Spleen (tissue), 13 donors: ENCODE measurements at regions of chr19 and their contacts with region 1.

Region 1: DNA sequence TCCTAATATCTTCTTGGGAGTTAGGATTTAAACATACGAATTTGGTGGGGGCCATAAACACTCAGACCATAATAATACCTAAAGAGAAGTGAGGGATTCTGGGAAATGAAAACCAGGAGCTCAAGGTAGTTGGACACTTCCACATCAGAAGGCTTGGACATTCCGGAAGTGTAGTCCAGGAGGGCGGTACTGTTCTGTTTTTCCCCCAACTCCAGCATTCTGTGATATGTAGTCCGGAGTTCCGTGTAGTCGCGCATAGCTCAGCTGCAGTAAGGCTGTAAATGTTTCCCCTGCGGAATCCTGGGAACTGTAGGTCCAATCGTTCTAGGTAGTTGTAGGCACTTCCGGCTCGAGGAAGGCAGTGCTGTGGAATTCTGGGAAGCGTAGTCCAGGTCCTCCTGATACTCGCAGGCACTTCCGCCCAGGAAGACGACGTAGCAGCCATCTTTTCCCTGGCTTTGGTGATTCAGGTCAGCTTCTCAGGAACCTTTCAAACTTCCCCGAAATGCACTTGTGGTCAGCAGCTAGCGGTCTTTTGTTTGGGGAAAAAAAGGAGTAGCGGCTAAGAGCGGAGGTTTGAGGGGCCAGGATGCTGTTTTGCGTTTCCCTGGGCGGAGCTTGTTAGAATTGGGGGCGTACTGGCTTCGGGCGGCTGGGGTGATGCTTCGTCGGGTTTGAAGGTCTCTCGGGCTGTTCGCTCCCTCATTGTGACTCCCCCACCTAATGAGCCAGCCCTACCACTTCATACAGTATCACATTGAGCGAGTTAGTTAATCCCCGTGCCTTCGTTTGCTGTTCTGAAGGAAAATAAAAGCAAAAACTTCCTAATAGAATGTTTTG is at the start of gene ZNF226:
- DNase-seq: peak; percentile 91
- H3K4me3 ChIP-seq: peak within 1 kb of the TSS; percentile 52 to 82 (median 66)
- H3K27ac ChIP-seq: peak within 1 kb of the TSS; percentile 81 to 95 (median 90)
- H3K4me1 ChIP-seq: peaks cover 9 to 25% (median 16%) of the 10 kb centered on the region in 6 donors
- H3K27me3 ChIP-seq: no peaks in the 10 kb centered on the region
- CTCF ChIP-seq: peak in 2 of 11 experiments; percentile 6 to 20
- POLR2A ChIP-seq: peak in 1 of 3 donors; percentile 58
- total RNA-seq, gene ZNF226: 21.5 to 40.0 (median 29.3) TPM

Region 2: GRCh38 chr19:44113138-44113783 is 51.6 kb before region 1 on chr19 and contains the start of gene ZNF225:
- intact Hi-C with region 1: loop called (anchors 10 kb)
- DNase-seq: peak; percentile 94
- H3K4me3 ChIP-seq: peak within 1 kb of the TSS; percentile 71 to 91 (median 78)
- H3K27ac ChIP-seq: peak within 1 kb of the TSS; percentile 32 to 85 (median 78)
- H3K4me1 ChIP-seq: peaks cover 10 to 34% (median 24%) of the 10 kb centered on the region in 6 donors
- H3K27me3 ChIP-seq: no peaks in the 10 kb centered on the region
- CTCF ChIP-seq: peak in 4 of 11 experiments; percentile 19 to 42 (median 32)
- POLR2A ChIP-seq: no peak
- total RNA-seq, gene ZNF225: 5.0 to 9.4 (median 6.6) TPM

Region 3: GRCh38 chr19:44207126-44207803 is 42.4 kb after region 1 on chr19:
- intact Hi-C with region 1: loop called (anchors 5 kb)
- DNase-seq: peak; percentile 93
- H3K4me3 ChIP-seq: peak overlapping the region; percentile 58 to 84 (median 68)
- H3K27ac ChIP-seq: peak overlapping the region; percentile 73 to 93 (median 91)
- H3K4me1 ChIP-seq: peaks cover 0 to 18% (median 13%) of the 10 kb centered on the region in 6 donors
- H3K27me3 ChIP-seq: no peaks in the 10 kb centered on the region
- CTCF ChIP-seq: no peak
- POLR2A ChIP-seq: no peak